ENCODE measurements at regions of chr3 and their contacts with region 1.

Region 1: GRCh38 chr3:169604568-169604967 is 58.9 kb downstream of the MECOM start:
- DNase-seq: no peak
- H3K4me3 ChIP-seq: peak overlapping the region in 1 of 4 experiments; percentile 27; a peak in 1 of 8 replicates
- H3K27ac ChIP-seq: no peak overlapping the region
- H3K4me1 ChIP-seq: peaks cover 0 to 3% (median 2%) of the 10 kb centered on the region in 4 experiments; a peak in 3 of 7 replicates
- H3K27me3 ChIP-seq: no peaks in the 10 kb centered on the region
- CTCF ChIP-seq: peak in 2 of 3 experiments; percentile 53 to 57; a peak in 3 of 4 replicates
- EP300 ChIP-seq: no peak
- POLR2A ChIP-seq: no peak
- RAD21 ChIP-seq: peak; percentile 50 to 62

Region 2: GRCh38 chr3:169591983-169592644 is 12.5 kb before region 1 on chr3:
- CTCF ChIA-PET with region 1: interaction called, 21 read pairs
- POLR2A ChIA-PET with region 1: no interaction called
- DNase-seq: no peak
- H3K4me3 ChIP-seq: no peak overlapping the region
- H3K27ac ChIP-seq: no peak overlapping the region
- H3K4me1 ChIP-seq: peaks cover 0 to 4% (median 3%) of the 10 kb centered on the region in 4 experiments; a peak in 3 of 7 replicates
- H3K27me3 ChIP-seq: no peaks in the 10 kb centered on the region
- CTCF ChIP-seq: no peak
- EP300 ChIP-seq: no peak
- POLR2A ChIP-seq: no peak
- RAD21 ChIP-seq: no peak

Region 3: GRCh38 chr3:169619793-169620192 is 15.2 kb after region 1 on chr3:
- CTCF ChIA-PET with region 1: interaction called, 33 read pairs
- POLR2A ChIA-PET with region 1: no interaction called
- DNase-seq: no peak
- H3K4me3 ChIP-seq: no peak overlapping the region
- H3K27ac ChIP-seq: no peak overlapping the region
- H3K4me1 ChIP-seq: peaks cover 2 to 7% (median 6%) of the 10 kb centered on the region in 4 experiments; a peak in 6 of 7 replicates
- H3K27me3 ChIP-seq: no peaks in the 10 kb centered on the region
- CTCF ChIP-seq: peak in 2 of 3 experiments; percentile 25 to 57; a peak in 3 of 4 replicates
- EP300 ChIP-seq: no peak
- POLR2A ChIP-seq: no peak
- RAD21 ChIP-seq: peak; percentile 9 to 26; a peak in 1 of 4 replicates

Region 4: DNA sequence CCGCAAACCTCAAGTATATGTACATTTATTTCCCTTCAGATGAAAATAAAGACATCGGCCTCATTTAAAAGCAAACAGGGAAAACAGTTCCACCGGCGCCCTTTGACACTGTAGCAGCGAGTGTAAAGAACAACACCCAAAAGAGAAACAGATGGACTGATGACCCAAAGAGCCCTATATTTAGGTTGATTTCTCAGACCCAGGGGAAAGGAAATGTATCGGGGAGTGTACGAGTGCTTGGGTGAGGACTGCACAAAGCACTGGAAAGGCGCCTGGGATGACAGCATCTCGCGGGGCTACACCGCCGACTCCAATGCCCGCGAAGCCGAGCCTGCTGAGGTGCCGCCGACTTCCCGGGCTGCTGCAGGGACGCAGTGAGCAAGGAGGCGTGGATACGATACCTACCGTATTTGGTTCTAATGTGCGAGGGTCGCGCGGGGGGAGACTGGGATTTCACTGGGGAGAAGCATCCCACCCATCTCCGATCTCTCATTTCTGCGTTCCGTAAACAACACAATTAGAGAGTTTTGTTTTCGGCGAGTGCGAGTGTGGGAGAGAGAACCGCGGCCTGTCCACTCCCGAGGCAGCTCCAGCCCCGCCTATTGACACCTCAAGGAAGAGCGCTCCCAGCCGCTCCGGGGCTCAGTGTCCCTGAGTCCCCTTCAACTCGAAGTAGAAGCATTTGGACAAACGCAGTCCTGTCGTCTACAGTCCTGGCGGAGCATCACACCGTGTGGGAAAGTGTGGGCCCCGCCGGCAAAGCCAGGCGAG is 57.0 kb after region 1 on chr3:
- CTCF ChIA-PET with region 1: interaction called, 12 read pairs
- POLR2A ChIA-PET with region 1: no interaction called
- DNase-seq: peak in 1 of 2 experiments; percentile 68
- H3K4me3 ChIP-seq: peak overlapping the region; percentile 66 to 79 (median 74)
- H3K27ac ChIP-seq: no peak overlapping the region
- H3K4me1 ChIP-seq: peaks cover 8 to 31% (median 21%) of the 10 kb centered on the region in 4 experiments
- H3K27me3 ChIP-seq: peaks cover 39 to 83% (median 70%) of the 10 kb centered on the region in 4 experiments
- CTCF ChIP-seq: no peak
- EP300 ChIP-seq: no peak
- POLR2A ChIP-seq: no peak
- RAD21 ChIP-seq: no peak

Region 5: DNA sequence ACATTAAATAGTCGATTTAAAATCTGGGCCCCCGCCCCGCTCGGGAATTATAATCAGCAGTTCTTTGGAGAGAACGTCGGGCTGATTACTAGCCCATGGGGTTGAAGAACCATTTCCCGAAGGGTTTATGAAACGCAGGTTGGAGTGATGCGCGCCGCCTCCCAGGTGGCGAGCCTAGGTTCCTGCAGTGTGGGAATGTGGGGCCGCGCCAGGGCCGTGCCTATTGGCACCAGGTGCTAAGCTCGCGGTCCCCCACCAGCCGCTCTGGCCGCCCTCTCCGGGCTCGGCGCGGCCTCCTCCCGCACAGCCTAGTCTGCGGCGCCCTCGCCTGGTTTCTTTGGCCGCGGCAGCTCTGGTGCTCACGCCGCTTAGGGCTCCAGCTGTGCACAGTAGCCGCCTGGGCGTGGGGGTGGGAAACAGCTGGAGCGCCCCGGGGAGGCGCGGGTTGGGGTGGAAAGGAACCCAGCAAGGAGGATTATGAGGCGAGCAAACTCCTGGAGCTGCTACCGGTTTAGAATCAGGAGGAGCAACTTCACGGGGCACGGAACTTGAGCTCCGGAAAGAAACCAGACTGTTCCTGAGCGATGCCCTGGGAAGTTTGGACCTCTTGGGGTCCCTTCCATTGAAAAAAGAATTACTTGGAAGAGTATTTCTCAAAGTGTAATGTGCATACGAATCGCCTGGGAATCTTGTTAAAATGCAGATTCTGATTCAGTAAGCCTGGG is 64.6 kb after region 1 on chr3:
- CTCF ChIA-PET with region 1: interaction called, 12 read pairs
- POLR2A ChIA-PET with region 1: no interaction called
- DNase-seq: peak in 1 of 2 experiments; percentile 87
- H3K4me3 ChIP-seq: peak overlapping the region; percentile 42 to 69 (median 58); a peak in 7 of 8 replicates
- H3K27ac ChIP-seq: no peak overlapping the region
- H3K4me1 ChIP-seq: peaks cover 11 to 25% (median 22%) of the 10 kb centered on the region in 4 experiments
- H3K27me3 ChIP-seq: peaks cover 35 to 55% (median 50%) of the 10 kb centered on the region in 4 experiments
- CTCF ChIP-seq: peak; percentile 76 to 88 (median 80)
- EP300 ChIP-seq: peak in 1 of 2 experiments; percentile 65; a peak in 1 of 3 replicates
- POLR2A ChIP-seq: no peak
- RAD21 ChIP-seq: peak; percentile 94 to 98

Region 6: DNA sequence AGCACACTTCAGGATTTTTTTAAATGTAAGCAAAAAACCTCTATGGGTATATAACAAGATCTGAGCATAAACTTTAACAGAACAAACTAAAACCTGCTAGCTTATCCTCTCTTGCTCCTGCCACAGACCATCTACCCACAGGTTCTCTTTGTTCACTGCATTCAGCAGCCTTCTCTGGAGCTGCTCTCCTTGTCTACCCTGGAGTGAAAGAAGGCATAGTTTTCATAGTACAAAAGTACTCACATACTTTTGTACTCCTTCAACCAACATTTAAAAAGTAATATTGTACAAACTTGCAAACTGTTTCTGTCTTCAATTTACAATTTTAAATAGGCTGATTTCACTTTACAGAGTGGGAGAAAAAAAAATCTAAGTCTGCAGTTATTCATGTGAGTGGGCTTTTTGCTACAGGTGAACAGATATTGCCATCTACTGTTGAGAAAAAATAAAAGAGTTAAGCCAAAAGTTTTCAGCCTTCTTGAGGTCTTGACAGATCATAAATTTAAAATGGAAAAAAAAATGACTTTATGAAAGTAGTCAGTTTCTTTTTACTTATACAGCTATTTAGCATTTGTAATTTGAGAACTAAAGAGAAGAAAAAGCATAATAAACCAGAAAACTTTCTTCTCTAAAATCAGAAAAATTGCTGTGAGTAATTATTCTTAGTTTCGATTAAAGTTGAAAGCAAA is 139.9 kb after region 1 on chr3:
- CTCF ChIA-PET with region 1: interaction called, 10 read pairs
- POLR2A ChIA-PET with region 1: no interaction called
- DNase-seq: no peak
- H3K4me3 ChIP-seq: no peak overlapping the region
- H3K27ac ChIP-seq: no peak overlapping the region
- H3K4me1 ChIP-seq: peaks cover 0 to 5% (median 0%) of the 10 kb centered on the region in 4 experiments; a peak in 2 of 7 replicates
- H3K27me3 ChIP-seq: peaks cover 0 to 1% (median 0%) of the 10 kb centered on the region in 4 experiments; a peak in 1 of 7 replicates
- CTCF ChIP-seq: peak in 1 of 3 experiments; percentile 19; a peak in 1 of 4 replicates
- EP300 ChIP-seq: no peak
- POLR2A ChIP-seq: no peak
- RAD21 ChIP-seq: peak; percentile 71 to 82

Measured in H1 (cell line).